ENCODE measurements at regions of chr1 and their contacts with region 1.

Region 1: GRCh38 chr1:93729906-93730305 is 48.3 kb upstream of the BCAR3 start:
- DNase-seq: no peak
- H3K4me3 ChIP-seq: no peak overlapping the region
- H3K27ac ChIP-seq: peak overlapping the region in 29 of 59 donors; percentile 0 to 74 (median 38)
- H3K27me3 ChIP-seq: no peaks in the 10 kb centered on the region
- CTCF ChIP-seq: no peak

Region 2: DNA sequence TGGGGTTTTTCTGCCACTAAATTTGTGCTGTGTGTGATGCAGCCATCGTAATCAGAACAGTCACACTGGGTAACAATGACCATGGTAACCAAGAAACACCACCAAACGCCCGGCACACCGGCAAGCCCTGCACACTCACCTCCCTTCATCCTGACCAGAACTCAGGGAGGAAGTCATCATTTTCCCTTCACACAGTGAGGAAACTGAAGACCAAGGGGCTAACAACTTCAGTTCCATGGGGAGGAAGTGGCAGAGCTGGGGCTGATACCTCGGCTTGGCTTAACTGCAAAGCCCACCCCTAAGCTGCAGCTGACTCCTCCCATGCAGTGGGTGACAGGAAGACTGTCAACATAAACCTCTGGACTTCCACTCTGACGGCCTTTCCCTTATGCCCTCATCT is 21.0 kb after region 1 on chr1:
- intact Hi-C with region 1: loop called in 1 of 2 experiments (anchors 1 kb)
- DNase-seq: no peak
- H3K4me3 ChIP-seq: no peak overlapping the region
- H3K27ac ChIP-seq: peak overlapping the region in 9 of 59 donors; percentile 12 to 81 (median 41)
- H3K27me3 ChIP-seq: peaks cover 0 to 5% (median 0%) of the 10 kb centered on the region in 45 donors
- CTCF ChIP-seq: no peak

Measured in dorsolateral prefrontal cortex (tissue), 120 donors.